Vagina (tissue), 2 donors: ENCODE measurements at regions of chr2 and their contacts with region 1.

Region 1: DNA sequence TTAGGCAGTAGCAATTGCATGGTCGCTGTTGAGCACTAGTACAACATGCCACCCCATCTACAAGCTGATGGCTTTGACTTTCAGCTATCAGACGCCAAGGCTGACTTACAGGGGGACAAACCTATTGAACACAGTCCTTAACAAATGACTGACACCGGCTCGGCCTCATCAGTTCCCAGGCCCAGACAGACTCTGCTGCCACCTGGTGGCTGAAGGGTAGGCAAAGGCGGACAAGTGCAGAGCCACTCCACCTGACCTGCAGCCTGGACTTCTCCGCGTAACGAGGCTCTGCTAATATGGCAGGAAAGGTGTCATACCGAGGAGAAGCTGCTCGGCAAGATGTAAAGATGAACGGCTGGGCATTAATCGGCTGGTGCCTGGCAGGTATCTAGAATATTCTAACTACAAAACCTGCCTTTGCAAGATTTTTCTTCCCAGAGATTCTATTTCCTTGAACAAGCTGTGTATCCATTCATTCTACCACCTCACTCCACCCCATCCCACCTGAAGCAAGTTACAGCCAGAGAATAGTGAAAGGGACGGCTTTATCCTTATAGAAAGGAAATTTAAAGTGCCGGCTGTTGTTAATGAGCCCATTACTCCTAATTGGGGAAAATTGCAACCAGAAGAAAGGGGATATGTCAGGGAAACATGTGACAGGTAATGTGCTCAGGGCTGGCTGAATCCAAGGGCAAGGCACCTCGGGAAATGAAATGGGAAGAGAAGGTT is 67.4 kb downstream of the STEAP3 start:
- DNase-seq: no peak
- H3K4me3 ChIP-seq: no peak overlapping the region
- H3K27ac ChIP-seq: no peak overlapping the region
- H3K4me1 ChIP-seq: no peaks in the 10 kb centered on the region
- H3K27me3 ChIP-seq: no peaks in the 10 kb centered on the region
- CTCF ChIP-seq: peak; percentile 48 to 63 (median 54)
- POLR2A ChIP-seq: no peak

Region 2: DNA sequence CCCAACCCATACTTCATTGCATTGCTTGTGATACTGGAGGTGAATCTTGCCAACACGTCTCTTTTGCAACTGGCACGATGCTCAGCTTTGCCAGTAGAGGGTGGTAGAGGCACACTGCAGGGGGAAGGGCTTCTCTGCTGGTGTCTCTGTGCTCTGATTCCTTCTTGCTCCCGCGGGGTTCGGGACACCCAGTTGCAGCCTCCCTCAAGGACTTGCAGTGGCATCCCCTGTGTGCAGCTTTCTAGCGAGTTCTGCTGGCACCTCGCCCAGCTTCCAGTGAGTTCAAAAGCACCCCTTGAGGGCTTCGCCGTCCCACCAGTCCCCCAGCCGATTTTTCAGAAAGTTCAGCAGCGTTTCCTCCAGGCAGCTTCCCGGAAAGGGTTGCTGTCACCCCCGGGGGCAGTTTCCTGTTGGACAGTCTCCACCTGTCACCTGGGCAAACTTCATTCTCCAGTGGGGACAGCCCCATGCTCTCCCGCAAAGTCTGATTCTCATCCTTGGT is 408.3 kb before region 1 on chr2:
- intact Hi-C with region 1: loop called (anchors 10 kb)
- DNase-seq: no peak
- H3K4me3 ChIP-seq: peak overlapping the region in 1 of 2 donors; percentile 5
- H3K27ac ChIP-seq: no peak overlapping the region
- H3K4me1 ChIP-seq: no peaks in the 10 kb centered on the region
- H3K27me3 ChIP-seq: no peaks in the 10 kb centered on the region
- CTCF ChIP-seq: peak in 2 of 3 experiments; percentile 37 to 40
- POLR2A ChIP-seq: no peak

Region 3: GRCh38 chr2:119311356-119311755 is 20.3 kb after region 1 on chr2:
- intact Hi-C with region 1: no loop called
- DNase-seq: no peak
- H3K4me3 ChIP-seq: no peak overlapping the region
- H3K27ac ChIP-seq: no peak overlapping the region
- H3K4me1 ChIP-seq: peaks cover 18% of the 10 kb centered on the region
- H3K27me3 ChIP-seq: no peaks in the 10 kb centered on the region
- CTCF ChIP-seq: no peak
- POLR2A ChIP-seq: no peak

Region 4: GRCh38 chr2:120693121-120693520 is 1402.1 kb after region 1 on chr2:
- intact Hi-C with region 1: no loop called
- DNase-seq: no peak
- H3K4me3 ChIP-seq: no peak overlapping the region
- H3K27ac ChIP-seq: no peak overlapping the region
- H3K4me1 ChIP-seq: no peaks in the 10 kb centered on the region
- H3K27me3 ChIP-seq: no peaks in the 10 kb centered on the region
- CTCF ChIP-seq: no peak
- POLR2A ChIP-seq: no peak